ENCODE measurements at regions of chr6 and their contacts with region 1.

Region 1: GRCh38 chr6:3363296-3364025 is 93.4 kb downstream of the SLC22A23 start:
- DNase-seq: peak; percentile 69 to 81 (median 77)
- ATAC-seq: peak; percentile 12 to 72 (median 46)
- H3K4me3 ChIP-seq: no peak overlapping the region
- H3K27ac ChIP-seq: peak overlapping the region in 2 of 3 donors; percentile 62 to 91
- H3K4me1 ChIP-seq: peaks cover 0 to 56% (median 28%) of the 10 kb centered on the region in 4 donors
- H3K27me3 ChIP-seq: no peaks in the 10 kb centered on the region
- CTCF ChIP-seq: no peak
- POLR2A ChIP-seq: no peak

Region 2: GRCh38 chr6:3396503-3397180 is 33.2 kb after region 1 on chr6:
- intact Hi-C with region 1: loop called in 1 of 2 experiments (anchors 5 kb)
- DNase-seq: no peak
- ATAC-seq: peak in 1 of 4 donors; percentile 7
- H3K4me3 ChIP-seq: no peak overlapping the region
- H3K27ac ChIP-seq: peak overlapping the region; percentile 61 to 92 (median 62)
- H3K4me1 ChIP-seq: peaks cover 0 to 79% (median 38%) of the 10 kb centered on the region in 4 donors
- H3K27me3 ChIP-seq: no peaks in the 10 kb centered on the region
- CTCF ChIP-seq: no peak
- POLR2A ChIP-seq: no peak

Measured in right lobe of liver (tissue), 6 donors.